ENCODE measurements at regions of chr3 and their contacts with region 1.

Region 1: GRCh38 chr3:4350789-4351163 is 47.6 kb downstream of the SETMAR start:
- DNase-seq: peak; percentile 47 to 74 (median 61)
- H3K4me3 ChIP-seq: peak overlapping the region in 2 of 4 donors; percentile 10 to 37
- H3K27ac ChIP-seq: peak overlapping the region in 3 of 5 donors; percentile 9 to 58 (median 43)
- H3K4me1 ChIP-seq: peaks cover 11 to 27% of the 10 kb centered on the region in 2 donors
- H3K27me3 ChIP-seq: no peaks in the 10 kb centered on the region
- CTCF ChIP-seq: peak; percentile 61 to 97 (median 88)
- POLR2A ChIP-seq: no peak

Region 2: GRCh38 chr3:4196506-4197147 is 154.1 kb before region 1 on chr3:
- intact Hi-C with region 1: no loop called
- DNase-seq: no peak
- H3K4me3 ChIP-seq: no peak overlapping the region
- H3K27ac ChIP-seq: no peak overlapping the region
- H3K4me1 ChIP-seq: no peaks in the 10 kb centered on the region
- H3K27me3 ChIP-seq: no peaks in the 10 kb centered on the region
- CTCF ChIP-seq: no peak
- POLR2A ChIP-seq: no peak

Region 3: DNA sequence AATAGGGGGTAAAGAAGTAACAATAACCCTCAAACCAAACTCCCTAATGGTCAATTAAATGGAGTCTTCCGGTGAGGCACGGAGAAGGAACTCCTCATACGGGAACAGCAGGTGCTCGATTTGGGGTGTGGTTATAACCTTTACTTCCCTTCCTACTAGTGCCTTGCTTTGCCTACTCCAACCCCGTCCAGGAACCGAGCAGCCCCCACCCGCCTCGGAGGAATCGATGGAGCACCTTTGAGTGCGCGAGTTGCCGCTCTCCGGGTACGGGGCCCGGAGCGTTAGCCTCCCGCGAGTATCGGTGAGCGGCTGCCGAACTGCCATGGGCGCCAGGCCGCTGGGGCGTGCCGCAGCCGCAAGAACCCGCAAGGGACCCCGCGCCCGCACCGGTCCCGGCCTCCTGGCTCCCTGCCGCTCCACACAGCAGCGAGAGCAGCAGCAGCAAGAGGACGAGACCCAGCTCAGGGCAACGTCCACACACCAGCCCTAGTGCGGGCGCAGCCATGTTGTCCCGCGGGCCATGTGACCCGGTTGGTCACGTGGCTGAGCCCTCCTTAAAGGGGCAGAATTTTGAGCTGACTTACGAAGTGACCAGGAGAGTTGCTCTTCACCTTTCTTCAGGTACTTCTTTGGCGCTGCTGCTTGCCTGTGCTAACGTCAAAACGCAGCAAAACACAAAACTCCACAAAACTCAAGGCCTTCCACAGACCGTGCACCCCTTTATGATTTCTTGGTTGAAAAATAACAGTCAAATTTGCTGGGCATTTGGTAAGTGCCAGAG is 116.2 kb after region 1 on chr3 and contains the start of gene SUMF1:
- intact Hi-C with region 1: loop called in 1 of 2 experiments (anchors 10 kb)
- DNase-seq: peak; percentile 76 to 86 (median 79)
- H3K4me3 ChIP-seq: peak within 1 kb of the TSS; percentile 62 to 99 (median 88)
- H3K27ac ChIP-seq: peak within 1 kb of the TSS in 4 of 5 donors; percentile 78 to 92 (median 86)
- H3K4me1 ChIP-seq: peaks cover 4 to 19% of the 10 kb centered on the region in 2 donors
- H3K27me3 ChIP-seq: no peaks in the 10 kb centered on the region
- CTCF ChIP-seq: no peak
- POLR2A ChIP-seq: peak; percentile 66 to 74
- total RNA-seq, gene SUMF1: 27.0 to 109 (median 43.8) TPM

Measured in adrenal gland (tissue), 19 donors.